Prostate gland (tissue), 2 donors: ENCODE measurements at regions of chr11 and their contacts with region 1.

Region 1: DNA sequence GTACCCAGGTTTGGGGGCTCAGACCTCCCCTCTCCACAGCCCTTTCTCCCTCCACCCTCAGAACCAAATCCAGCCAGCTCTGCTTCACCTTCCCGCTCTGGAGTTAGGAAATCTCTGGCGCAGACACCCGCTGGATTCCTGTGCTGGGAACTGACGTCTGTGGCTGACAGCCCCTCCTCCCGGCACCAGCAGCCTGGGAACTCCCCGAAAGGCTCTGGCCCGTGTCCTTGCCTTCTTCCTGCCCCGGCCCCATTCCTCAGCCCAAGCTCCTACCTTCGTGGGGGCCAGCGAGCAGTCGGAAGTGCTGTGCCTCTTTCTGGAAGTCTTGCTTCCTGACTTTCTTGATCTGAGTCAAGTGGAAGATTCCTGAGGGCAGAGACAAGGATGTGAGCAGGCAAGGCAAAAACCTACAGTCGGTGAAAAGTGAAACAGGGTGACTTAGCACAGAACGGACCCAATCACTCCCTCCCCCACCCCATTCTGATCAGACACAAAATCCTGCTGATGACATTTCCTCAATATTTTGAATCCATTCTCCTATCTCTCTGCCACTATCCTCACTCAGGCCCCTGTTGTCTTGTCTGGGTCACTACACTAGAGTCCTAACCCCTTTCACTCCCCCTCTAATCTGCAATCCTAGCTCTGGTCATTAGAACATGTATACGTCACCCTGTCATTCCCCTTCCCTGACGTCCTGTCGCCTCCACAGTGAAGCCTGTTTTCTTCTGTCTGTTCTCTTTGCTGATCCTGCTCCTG is 34.1 kb downstream of the CHRDL2 start:
- DNase-seq: peak; percentile 79
- H3K4me3 ChIP-seq: no peak overlapping the region
- H3K27ac ChIP-seq: peak overlapping the region; percentile 19 to 63
- H3K4me1 ChIP-seq: no peaks in the 10 kb centered on the region
- H3K27me3 ChIP-seq: no peaks in the 10 kb centered on the region
- CTCF ChIP-seq: no peak
- POLR2A ChIP-seq: no peak

Region 2: GRCh38 chr11:74641289-74641688 is 55.8 kb before region 1 on chr11:
- intact Hi-C with region 1: loop called (anchors 5 kb)
- DNase-seq: no peak
- H3K4me3 ChIP-seq: no peak overlapping the region
- H3K27ac ChIP-seq: no peak overlapping the region
- H3K4me1 ChIP-seq: no peaks in the 10 kb centered on the region
- H3K27me3 ChIP-seq: no peaks in the 10 kb centered on the region
- CTCF ChIP-seq: no peak
- POLR2A ChIP-seq: no peak

Region 3: GRCh38 chr11:74726547-74727182 is 29.6 kb after region 1 on chr11:
- intact Hi-C with region 1: loop called (anchors 5 kb)
- DNase-seq: peak; percentile 68
- H3K4me3 ChIP-seq: no peak overlapping the region
- H3K27ac ChIP-seq: no peak overlapping the region
- H3K4me1 ChIP-seq: no peaks in the 10 kb centered on the region
- H3K27me3 ChIP-seq: peaks cover 3% of the 10 kb centered on the region
- CTCF ChIP-seq: peak; percentile 33 to 94 (median 84)
- POLR2A ChIP-seq: no peak